ENCODE measurements at regions of chr20 and their contacts with region 1.

Region 1: DNA sequence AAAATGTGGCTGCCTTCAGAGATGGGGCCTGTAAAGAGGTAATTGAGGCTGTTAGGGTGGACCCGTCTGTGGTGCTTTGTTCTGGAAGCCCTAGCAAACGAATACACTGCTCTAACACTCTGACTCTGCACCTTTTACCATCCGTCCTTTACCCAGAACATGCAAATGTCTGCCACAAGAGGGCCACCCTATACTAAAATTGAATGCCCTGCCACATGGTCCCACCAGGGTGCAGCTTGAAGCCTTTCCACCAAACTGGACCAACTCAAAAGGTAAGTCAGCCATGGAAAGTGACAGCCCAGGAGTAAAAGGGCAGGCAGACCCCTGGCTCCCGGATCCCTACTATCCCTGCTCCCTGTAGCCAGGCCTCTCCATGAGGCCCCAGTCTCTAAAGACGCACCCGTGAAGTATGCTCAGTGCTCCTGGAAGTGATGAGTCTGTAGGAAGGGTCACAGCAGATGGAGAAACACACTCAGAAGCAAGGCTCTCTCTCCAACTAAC is 5.8 kb upstream of the BFSP1 start:
- DNase-seq: peak; percentile 90
- ATAC-seq: peak; percentile 100
- H3K4me3 ChIP-seq: peak overlapping the region in 1 of 3 experiments; percentile 18; a peak in 1 of 6 replicates
- H3K27ac ChIP-seq: no peak overlapping the region
- H3K4me1 ChIP-seq: peaks cover 23% of the 10 kb centered on the region
- H3K27me3 ChIP-seq: peaks cover 0 to 2% of the 10 kb centered on the region in 2 experiments; a peak in 1 of 5 replicates
- CTCF ChIP-seq: peak; percentile 99
- EP300 ChIP-seq: peak in 1 of 2 experiments; percentile 29; a peak in 1 of 4 replicates
- POLR2A ChIP-seq: no peak
- RAD21 ChIP-seq: peak; percentile 98

Region 2: DNA sequence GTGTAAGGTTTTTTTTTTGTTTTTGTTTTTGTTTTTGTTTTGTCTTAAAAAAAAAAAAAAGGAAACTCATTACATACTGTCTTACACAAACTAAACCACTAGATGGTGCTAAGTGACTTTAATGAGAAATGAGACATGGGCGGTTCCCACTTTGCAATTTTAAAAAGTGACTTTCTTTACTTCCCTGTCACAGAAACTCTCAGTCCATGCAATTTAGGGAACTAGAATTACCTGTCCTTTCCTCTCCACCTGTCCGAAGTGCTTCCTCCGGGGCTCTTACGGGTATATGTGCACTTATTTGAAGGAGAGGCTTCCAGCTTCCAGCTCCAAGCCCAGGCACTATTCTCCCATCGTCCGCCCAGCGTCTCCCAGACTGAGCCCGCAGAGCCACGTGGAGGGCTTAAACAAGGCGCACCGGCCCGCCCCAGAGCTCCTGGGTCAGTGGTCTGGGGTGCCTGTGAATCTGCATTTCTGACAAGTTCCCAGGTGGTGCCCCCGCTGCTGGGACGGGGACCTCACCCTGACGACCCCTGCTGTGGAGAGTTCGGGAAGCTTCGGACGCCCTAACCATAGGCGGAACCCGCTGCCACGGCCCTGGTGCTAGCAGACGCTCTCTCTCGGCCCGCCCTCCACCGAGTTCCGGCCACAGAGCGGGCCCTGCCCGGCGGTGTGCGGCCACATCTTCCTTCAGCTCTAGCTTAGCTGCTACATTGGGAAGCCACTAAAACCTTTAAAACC is 31.9 kb before region 1 on chr20:
- CTCF ChIA-PET with region 1: interaction called, 13 read pairs
- POLR2A ChIA-PET with region 1: no interaction called
- in situ Hi-C with region 1: no loop called
- intact Hi-C with region 1: loop called (anchors 1 kb)
- DNase-seq: peak; percentile 64
- ATAC-seq: peak; percentile 86
- H3K4me3 ChIP-seq: peak overlapping the region; percentile 35 to 74 (median 51)
- H3K27ac ChIP-seq: no peak overlapping the region
- H3K4me1 ChIP-seq: peaks cover 19% of the 10 kb centered on the region
- H3K27me3 ChIP-seq: peaks cover 1 to 74% of the 10 kb centered on the region in 2 experiments; a peak in 4 of 5 replicates
- CTCF ChIP-seq: peak; percentile 79
- EP300 ChIP-seq: no peak
- POLR2A ChIP-seq: no peak
- RAD21 ChIP-seq: peak; percentile 69

Region 3: GRCh38 chr20:17518339-17519052 is 18.5 kb before region 1 on chr20:
- CTCF ChIA-PET with region 1: no interaction called
- POLR2A ChIA-PET with region 1: no interaction called
- in situ Hi-C with region 1: no loop called
- intact Hi-C with region 1: no loop called
- DNase-seq: no peak
- ATAC-seq: no peak
- H3K4me3 ChIP-seq: no peak overlapping the region
- H3K27ac ChIP-seq: no peak overlapping the region
- H3K4me1 ChIP-seq: peaks cover 9% of the 10 kb centered on the region; the same call in 1 of the 2 replicates
- H3K27me3 ChIP-seq: peaks cover 4 to 50% of the 10 kb centered on the region in 2 experiments; a peak in 4 of 5 replicates
- CTCF ChIP-seq: no peak
- EP300 ChIP-seq: no peak
- POLR2A ChIP-seq: no peak
- RAD21 ChIP-seq: no peak

Region 4: GRCh38 chr20:17569616-17570346 is 32.8 kb after region 1 on chr20 and contains the start of gene DSTN:
- CTCF ChIA-PET with region 1: interaction called, 13 read pairs
- POLR2A ChIA-PET with region 1: interaction called, 7 read pairs
- in situ Hi-C with region 1: no loop called
- intact Hi-C with region 1: loop called (anchors 1 kb)
- DNase-seq: peak; percentile 90
- ATAC-seq: peak; percentile 91
- H3K4me3 ChIP-seq: peak within 1 kb of the TSS; percentile 86 to 100 (median 94)
- H3K27ac ChIP-seq: peak within 1 kb of the TSS; percentile 61
- H3K4me1 ChIP-seq: peaks cover 39% of the 10 kb centered on the region
- H3K27me3 ChIP-seq: no peaks in the 10 kb centered on the region; a peak in 1 of 5 replicates
- CTCF ChIP-seq: no peak
- EP300 ChIP-seq: no peak
- POLR2A ChIP-seq: peak; percentile 81 to 83
- RAD21 ChIP-seq: no peak; the same call in none of the 2 replicates
- total RNA-seq, gene DSTN: 106 and 164 TPM in 2 replicates

Region 5: DNA sequence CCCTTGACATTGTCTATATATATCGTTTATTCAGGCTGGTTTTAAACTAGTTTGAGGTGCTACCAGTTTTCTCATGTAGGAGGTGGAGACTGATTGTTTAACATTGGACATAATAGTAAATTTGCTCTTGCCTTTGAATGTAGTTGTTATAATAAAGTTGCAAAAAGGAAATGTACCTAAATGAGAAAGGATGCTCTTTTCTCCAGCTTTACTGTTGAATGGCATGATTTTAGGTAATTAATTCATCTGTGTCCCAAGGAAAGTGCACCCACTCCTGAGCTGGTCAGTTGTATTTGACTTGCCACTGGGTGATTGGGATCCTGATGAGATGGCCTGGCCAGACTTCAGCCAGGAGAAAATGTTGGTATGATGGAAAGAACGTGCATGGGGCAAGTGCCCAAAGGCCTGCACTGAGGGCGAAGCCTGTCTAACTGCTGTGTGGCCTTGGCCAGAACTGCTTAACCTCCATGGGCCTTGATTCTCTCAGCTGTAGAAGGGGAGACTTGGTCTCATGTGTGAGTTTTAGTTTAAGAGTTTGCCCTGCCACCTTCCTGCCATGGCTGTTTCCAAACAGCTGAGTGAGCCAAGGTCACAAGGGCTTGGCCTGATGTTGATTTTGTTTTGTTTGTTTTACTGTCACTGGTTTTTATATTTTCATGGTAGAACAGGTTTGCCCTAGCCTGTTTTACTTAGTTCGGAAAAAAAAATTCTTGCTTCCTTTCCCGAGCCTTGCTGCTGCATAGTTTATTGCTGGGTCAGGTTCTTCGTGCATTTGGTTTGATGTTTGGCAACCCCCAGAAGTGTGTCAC is 68.1 kb after region 1 on chr20:
- CTCF ChIA-PET with region 1: interaction called, 14 read pairs
- POLR2A ChIA-PET with region 1: interaction called, 4 read pairs
- in situ Hi-C with region 1: loop called (anchors 5 kb)
- intact Hi-C with region 1: loop called (anchors 1 kb)
- DNase-seq: peak; percentile 80
- ATAC-seq: peak; percentile 73
- H3K4me3 ChIP-seq: 0 out of 6 replicates have a peak overlapping the region, but pooled peaks of 1 of the 3 experiments have one; percentile 8
- H3K27ac ChIP-seq: peak overlapping the region; percentile 49
- H3K4me1 ChIP-seq: peaks cover 35% of the 10 kb centered on the region
- H3K27me3 ChIP-seq: no peaks in the 10 kb centered on the region
- CTCF ChIP-seq: peak; percentile 38
- EP300 ChIP-seq: peak in 1 of 2 experiments; percentile 71; a peak in 1 of 4 replicates
- POLR2A ChIP-seq: 0 out of 4 replicates have a peak, but pooled peaks of 1 of the 2 experiments have one; percentile 17
- RAD21 ChIP-seq: peak; percentile 44

Region 6: GRCh38 chr20:17611540-17612286 is 74.7 kb after region 1 on chr20:
- CTCF ChIA-PET with region 1: interaction called, 47 read pairs
- POLR2A ChIA-PET with region 1: interaction called, 3 read pairs
- in situ Hi-C with region 1: loop called (anchors 5 kb)
- intact Hi-C with region 1: no loop called
- DNase-seq: peak; percentile 65
- ATAC-seq: peak; percentile 14
- H3K4me3 ChIP-seq: no peak overlapping the region
- H3K27ac ChIP-seq: peak overlapping the region; percentile 32
- H3K4me1 ChIP-seq: peaks cover 22% of the 10 kb centered on the region
- H3K27me3 ChIP-seq: no peaks in the 10 kb centered on the region
- CTCF ChIP-seq: peak; percentile 79
- EP300 ChIP-seq: no peak
- POLR2A ChIP-seq: peak in 1 of 2 experiments; percentile 56; a peak in 1 of 4 replicates
- RAD21 ChIP-seq: peak; percentile 81

Region 7: DNA sequence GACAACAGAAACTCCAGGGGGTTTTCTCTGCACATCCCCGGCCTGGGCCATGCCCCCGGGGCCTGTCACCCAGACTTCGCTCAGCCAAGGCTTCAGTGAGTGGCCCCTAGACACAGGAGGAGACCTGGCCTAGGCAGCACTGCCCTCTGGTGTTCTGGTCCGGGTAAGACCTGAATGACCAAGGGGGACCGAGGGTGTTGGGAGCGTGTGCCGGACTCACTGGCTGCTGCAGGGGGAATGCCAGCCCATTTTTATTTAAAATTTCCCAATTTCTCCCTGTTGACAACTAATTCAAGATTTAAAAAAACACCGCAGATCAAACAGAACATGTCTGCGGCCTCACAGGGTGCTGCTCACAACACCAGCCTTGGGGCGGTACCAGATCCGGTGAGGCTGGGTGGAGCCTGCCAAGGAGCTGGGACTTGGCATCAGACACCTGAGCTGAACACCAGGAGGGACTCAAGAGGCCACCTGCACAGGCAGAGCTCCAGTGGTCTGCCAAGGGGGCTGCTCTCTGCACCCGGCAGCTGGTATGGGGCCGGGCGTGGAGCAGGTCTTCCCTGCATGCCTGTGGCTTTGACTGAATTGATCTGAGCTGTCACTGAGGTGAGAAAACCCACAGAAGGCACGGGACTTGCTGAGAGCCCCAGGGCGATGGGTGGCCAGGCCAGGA is 80.7 kb after region 1 on chr20:
- CTCF ChIA-PET with region 1: interaction called, 47 read pairs
- POLR2A ChIA-PET with region 1: no interaction called
- in situ Hi-C with region 1: loop called (anchors 5 kb)
- intact Hi-C with region 1: loop called (anchors 1 kb)
- DNase-seq: peak; percentile 42
- ATAC-seq: peak; percentile 35
- H3K4me3 ChIP-seq: no peak overlapping the region
- H3K27ac ChIP-seq: no peak overlapping the region
- H3K4me1 ChIP-seq: peaks cover 9% of the 10 kb centered on the region
- H3K27me3 ChIP-seq: no peaks in the 10 kb centered on the region
- CTCF ChIP-seq: peak; percentile 84
- EP300 ChIP-seq: no peak
- POLR2A ChIP-seq: no peak; a peak in 2 of 4 replicates
- RAD21 ChIP-seq: peak; percentile 77

Region 8: GRCh38 chr20:17938871-17939619 is 402.1 kb after region 1 on chr20:
- CTCF ChIA-PET with region 1: interaction called, 17 read pairs
- POLR2A ChIA-PET with region 1: no interaction called
- in situ Hi-C with region 1: loop called (anchors 10 kb)
- intact Hi-C with region 1: loop called (anchors 1 kb)
- DNase-seq: peak; percentile 76
- ATAC-seq: peak; percentile 76
- H3K4me3 ChIP-seq: peak overlapping the region; percentile 5 to 62 (median 32); a peak in 3 of 6 replicates
- H3K27ac ChIP-seq: peak overlapping the region; percentile 43
- H3K4me1 ChIP-seq: peaks cover 47% of the 10 kb centered on the region
- H3K27me3 ChIP-seq: peaks cover 6 to 22% of the 10 kb centered on the region in 2 experiments; a peak in 4 of 5 replicates
- CTCF ChIP-seq: peak; percentile 99
- EP300 ChIP-seq: no peak
- POLR2A ChIP-seq: peak in 1 of 2 experiments; percentile 44; a peak in 2 of 4 replicates
- RAD21 ChIP-seq: peak; percentile 99

Measured in HepG2 (cell line).